ENCODE measurements at regions of chr9 and their contacts with region 1.

Region 1: DNA sequence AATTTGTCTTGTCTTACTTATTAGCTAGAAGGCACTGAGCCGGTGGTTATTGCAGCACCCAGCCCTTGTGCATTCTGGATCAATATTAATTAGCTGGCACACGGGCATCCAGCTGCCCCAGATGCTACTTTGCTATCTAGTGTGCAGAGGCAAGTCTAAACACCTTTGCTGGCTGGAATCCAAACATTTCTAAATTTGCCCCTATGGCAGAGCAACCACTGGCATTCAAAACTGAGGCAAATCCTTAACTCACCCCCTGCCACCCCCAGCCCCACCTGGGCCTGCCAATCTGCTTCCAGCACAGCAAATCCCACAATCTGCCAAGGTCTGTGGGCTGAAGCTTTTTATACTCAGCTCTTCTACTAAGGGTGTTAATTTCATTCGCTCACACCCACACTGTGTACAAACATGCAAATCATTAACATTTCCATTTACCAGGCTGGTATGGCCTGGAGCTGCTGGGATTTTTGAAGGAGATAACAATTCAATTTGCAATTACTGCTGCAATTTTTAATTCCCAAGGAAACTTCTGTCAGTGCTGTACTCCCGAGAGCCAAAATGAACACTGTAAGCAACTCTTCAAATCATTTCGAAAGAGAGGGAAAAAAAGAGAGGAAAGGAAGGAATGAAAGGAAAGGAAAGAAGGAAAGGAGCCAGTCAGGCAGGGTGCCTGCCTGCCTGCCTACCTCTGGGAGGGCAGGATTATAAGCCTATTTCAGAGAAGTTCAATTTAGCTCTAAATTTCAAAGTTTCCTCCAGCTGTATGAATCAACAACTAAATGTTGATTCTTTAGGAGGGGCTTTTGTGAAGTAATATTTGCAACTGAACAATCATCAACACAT is 35.5 kb downstream of the RAPGEF1 start:
- DNase-seq: no peak
- ATAC-seq: peak; percentile 12; the same call in 1 of the 3 replicates
- H3K4me3 ChIP-seq: no peak overlapping the region
- H3K27ac ChIP-seq: peak overlapping the region; percentile 83
- H3K4me1 ChIP-seq: peaks cover 63% of the 10 kb centered on the region
- H3K27me3 ChIP-seq: no peaks in the 10 kb centered on the region
- CTCF ChIP-seq: no peak
- EP300 ChIP-seq: no peak
- POLR2A ChIP-seq: no peak
- RAD21 ChIP-seq: no peak

Region 2: GRCh38 chr9:131554088-131554864 is 150.1 kb before region 1 on chr9:
- CTCF ChIA-PET with region 1: no interaction called
- POLR2A ChIA-PET with region 1: no interaction called
- RAD21 ChIA-PET with region 1: no interaction called
- SMC1A ChIA-PET with region 1: no interaction called
- in situ Hi-C with region 1: no loop called
- intact Hi-C with region 1: no loop called
- DNase-seq: no peak
- ATAC-seq: no peak
- H3K4me3 ChIP-seq: no peak overlapping the region
- H3K27ac ChIP-seq: no peak overlapping the region
- H3K4me1 ChIP-seq: no peaks in the 10 kb centered on the region
- H3K27me3 ChIP-seq: no peaks in the 10 kb centered on the region
- CTCF ChIP-seq: no peak
- EP300 ChIP-seq: no peak
- POLR2A ChIP-seq: no peak
- RAD21 ChIP-seq: no peak

Region 3: GRCh38 chr9:131668439-131669268 is 35.7 kb before region 1 on chr9:
- CTCF ChIA-PET with region 1: interaction called, 73 read pairs
- POLR2A ChIA-PET with region 1: interaction called, 21 read pairs
- RAD21 ChIA-PET with region 1: interaction called, 23 read pairs
- SMC1A ChIA-PET with region 1: interaction called, 19 read pairs
- in situ Hi-C with region 1: no loop called
- intact Hi-C with region 1: loop called (anchors 5 kb)
- DNase-seq: peak; percentile 62
- ATAC-seq: peak; percentile 74
- H3K4me3 ChIP-seq: peak overlapping the region; percentile 54
- H3K27ac ChIP-seq: peak overlapping the region; percentile 88
- H3K4me1 ChIP-seq: peaks cover 72% of the 10 kb centered on the region
- H3K27me3 ChIP-seq: no peaks in the 10 kb centered on the region
- CTCF ChIP-seq: peak; percentile 3 to 5 (median 4); a peak in 1 of 6 replicates
- EP300 ChIP-seq: peak; percentile 25 to 47; a peak in 2 of 4 replicates
- POLR2A ChIP-seq: peak; percentile 11; the same call in 1 of the 2 replicates
- RAD21 ChIP-seq: no peak; the same call in 1 of the 2 replicates

Region 4: DNA sequence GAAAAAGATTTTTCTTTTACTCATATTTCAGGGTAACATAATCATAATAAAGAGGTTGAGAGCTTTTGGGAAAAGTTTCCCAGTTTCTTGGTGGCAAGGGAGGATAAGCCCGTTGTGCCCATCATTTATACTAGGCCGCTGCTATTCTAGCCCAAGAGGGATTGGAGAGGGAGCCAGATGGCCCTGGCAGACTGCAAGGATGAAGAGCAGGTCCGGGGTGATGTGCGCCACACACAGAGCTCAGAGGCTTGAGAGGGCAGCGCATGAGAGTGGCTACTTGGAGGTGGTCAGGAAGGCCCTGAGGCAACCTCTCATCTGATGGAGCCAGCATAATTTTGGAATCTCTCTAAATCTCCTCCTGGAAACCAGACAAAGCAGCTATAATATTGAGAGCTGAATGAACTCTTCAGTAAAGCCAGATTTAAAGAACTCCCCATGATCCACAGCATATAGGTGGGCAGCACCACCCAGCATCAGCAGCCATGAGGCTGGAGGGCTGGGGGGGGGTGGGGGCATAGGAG is 265.2 kb after region 1 on chr9:
- CTCF ChIA-PET with region 1: no interaction called
- POLR2A ChIA-PET with region 1: no interaction called
- RAD21 ChIA-PET with region 1: no interaction called
- SMC1A ChIA-PET with region 1: no interaction called
- in situ Hi-C with region 1: no loop called
- intact Hi-C with region 1: no loop called
- DNase-seq: no peak
- ATAC-seq: no peak
- H3K4me3 ChIP-seq: no peak overlapping the region
- H3K27ac ChIP-seq: no peak overlapping the region
- H3K4me1 ChIP-seq: no peaks in the 10 kb centered on the region
- H3K27me3 ChIP-seq: no peaks in the 10 kb centered on the region
- CTCF ChIP-seq: no peak
- EP300 ChIP-seq: no peak
- POLR2A ChIP-seq: no peak
- RAD21 ChIP-seq: no peak